ENCODE measurements at regions of chr10 and their contacts with region 1.

Region 1: DNA sequence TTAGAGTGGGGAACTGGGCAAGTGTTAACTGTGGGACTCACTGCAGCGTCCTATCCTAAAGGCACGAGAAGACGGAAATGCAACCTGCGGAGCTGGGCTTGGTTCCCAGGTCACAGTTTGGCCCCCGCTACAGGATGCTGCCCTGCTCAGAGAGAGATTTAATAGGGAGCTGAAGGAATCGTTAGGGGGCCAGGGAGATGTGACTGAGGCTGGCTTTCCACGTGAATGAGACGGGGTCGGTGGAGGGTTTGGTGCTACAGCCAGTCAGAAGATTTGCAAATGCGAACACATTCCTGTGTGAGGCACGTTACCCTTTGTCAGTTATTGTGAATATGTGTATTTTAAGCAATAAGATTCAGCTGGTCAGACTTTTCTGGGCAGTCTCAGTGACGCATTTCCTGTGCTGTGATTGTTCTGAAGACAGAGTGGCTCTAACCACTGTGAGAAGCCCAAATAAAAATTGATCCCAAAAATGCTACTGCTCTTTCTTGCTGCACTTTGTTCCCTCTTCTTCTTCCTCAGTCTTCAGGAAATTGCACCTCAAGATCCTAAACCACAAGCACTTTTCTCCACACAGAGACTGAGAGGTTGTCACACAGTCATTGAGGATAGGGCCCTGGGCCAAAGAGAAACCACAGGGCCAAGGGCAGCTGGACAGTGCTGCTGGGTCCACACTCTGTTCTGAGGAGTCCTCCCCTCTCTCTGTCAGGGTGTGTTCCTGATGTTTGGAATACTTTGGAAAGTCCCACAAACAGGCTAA is 21.2 kb downstream of the CYP17A1 start:
- DNase-seq: peak in 2 of 4 donors; percentile 47 to 78
- ATAC-seq: peak; percentile 69
- H3K4me3 ChIP-seq: no peak overlapping the region
- H3K27ac ChIP-seq: peak overlapping the region; percentile 92 to 93
- H3K4me1 ChIP-seq: peaks cover 24 to 76% of the 10 kb centered on the region in 2 donors
- H3K27me3 ChIP-seq: no peaks in the 10 kb centered on the region
- CTCF ChIP-seq: no peak

Region 2: GRCh38 chr10:101512738-101513137 is 1303.2 kb before region 1 on chr10:
- intact Hi-C with region 1: no loop called
- DNase-seq: no peak
- ATAC-seq: peak; percentile 32
- H3K4me3 ChIP-seq: no peak overlapping the region
- H3K27ac ChIP-seq: no peak overlapping the region
- H3K4me1 ChIP-seq: no peaks in the 10 kb centered on the region
- H3K27me3 ChIP-seq: no peaks in the 10 kb centered on the region
- CTCF ChIP-seq: no peak

Region 3: DNA sequence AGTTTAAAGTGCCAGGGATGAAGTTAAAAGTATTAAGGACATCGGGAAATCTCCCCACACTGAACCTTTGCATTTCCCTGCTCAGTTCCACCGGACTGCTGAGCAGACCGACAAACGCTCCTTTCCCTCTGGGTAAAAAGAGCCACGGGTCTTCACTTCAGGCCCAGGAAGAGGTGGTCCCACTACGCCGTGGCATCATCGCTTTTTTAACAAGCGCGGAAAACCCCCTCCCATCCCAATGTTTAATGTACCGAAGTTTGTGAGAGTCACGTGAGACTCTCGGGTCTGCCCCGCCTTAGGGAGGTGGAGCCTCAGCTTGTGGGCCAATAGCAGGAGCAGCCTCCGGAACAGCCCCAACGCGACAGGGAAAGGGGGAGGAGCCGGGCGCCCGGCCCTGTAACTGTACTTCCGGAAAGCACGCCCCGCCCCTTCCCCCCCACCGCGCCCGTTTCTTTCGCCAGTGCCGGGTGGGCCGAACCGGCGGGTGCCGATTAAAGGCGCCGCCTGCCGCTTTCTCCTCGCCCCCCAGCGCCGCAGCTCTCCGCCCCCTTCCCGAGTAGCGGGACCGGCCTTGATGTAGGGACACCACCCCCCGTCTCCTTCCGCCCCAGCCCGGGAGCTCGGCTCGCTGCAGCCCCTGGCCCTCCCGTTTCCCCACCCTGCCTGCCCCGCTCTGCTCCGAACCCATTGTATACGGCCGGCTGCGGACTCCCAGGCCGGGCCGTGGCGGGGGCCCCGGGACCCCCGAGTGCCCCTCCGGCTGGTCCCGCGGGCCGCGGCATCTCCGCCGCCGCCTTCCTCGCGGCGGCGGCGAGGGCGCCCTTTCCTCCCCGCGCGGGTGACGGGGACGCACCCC is 173.9 kb before region 1 on chr10:
- intact Hi-C with region 1: no loop called
- DNase-seq: peak; percentile 97 to 99 (median 98)
- ATAC-seq: peak; percentile 76
- H3K4me3 ChIP-seq: peak overlapping the region; percentile 76 to 85
- H3K27ac ChIP-seq: peak overlapping the region; percentile 98 to 99
- H3K4me1 ChIP-seq: peaks cover 5 to 11% of the 10 kb centered on the region in 2 donors
- H3K27me3 ChIP-seq: no peaks in the 10 kb centered on the region
- CTCF ChIP-seq: no peak

Region 4: GRCh38 chr10:102752934-102753664 is 62.9 kb before region 1 on chr10:
- intact Hi-C with region 1: loop called in 1 of 2 experiments (anchors 10 kb)
- DNase-seq: no peak
- ATAC-seq: peak; percentile 91
- H3K4me3 ChIP-seq: no peak overlapping the region
- H3K27ac ChIP-seq: peak overlapping the region; percentile 50 to 67
- H3K4me1 ChIP-seq: peaks cover 8 to 25% of the 10 kb centered on the region in 2 donors
- H3K27me3 ChIP-seq: no peaks in the 10 kb centered on the region
- CTCF ChIP-seq: peak; percentile 38 to 42

Region 5: DNA sequence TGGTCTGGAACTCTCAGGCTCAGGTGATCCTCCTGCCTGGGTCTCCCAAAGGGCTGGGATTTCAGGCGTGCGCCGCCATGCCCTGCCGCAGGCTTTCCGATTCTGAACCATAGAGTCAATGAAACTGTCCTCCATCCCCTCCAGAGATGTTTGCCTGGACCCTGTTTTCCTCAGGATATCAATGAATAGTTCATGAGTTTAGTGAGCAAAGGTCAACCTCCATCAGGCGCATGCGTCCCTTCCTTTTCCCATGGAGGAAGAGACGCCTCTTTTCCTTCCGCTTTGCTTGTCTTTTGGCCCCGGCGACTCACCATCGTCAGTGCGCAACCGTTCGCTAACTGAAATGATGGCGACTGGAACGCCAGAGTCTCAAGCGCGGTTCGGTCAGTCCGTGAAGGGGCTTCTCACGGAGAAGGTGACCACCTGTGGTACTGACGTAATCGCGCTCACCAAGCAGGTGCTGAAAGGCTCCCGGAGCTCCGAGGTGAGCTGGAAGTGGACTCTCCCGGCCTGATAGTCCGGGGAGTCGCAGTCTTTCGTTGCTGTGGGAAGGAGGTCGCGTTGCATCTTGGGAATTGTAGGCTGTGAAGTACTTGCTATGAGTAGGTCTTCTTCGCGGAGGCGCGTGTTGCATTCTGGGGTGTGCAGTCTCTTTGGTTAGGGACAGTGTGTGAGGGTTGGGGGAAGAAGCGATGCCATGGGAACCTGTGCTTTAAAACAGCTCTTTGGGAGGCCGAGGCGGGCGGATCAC is 38.1 kb after region 1 on chr10 and contains the start of gene BORCS7:
- intact Hi-C with region 1: no loop called
- DNase-seq: peak; percentile 92 to 98 (median 96)
- ATAC-seq: peak; percentile 99
- H3K4me3 ChIP-seq: peak within 1 kb of the TSS; percentile 52 to 70
- H3K27ac ChIP-seq: peak within 1 kb of the TSS; percentile 93
- H3K4me1 ChIP-seq: peaks cover 16 to 19% of the 10 kb centered on the region in 2 donors
- H3K27me3 ChIP-seq: no peaks in the 10 kb centered on the region
- CTCF ChIP-seq: no peak
- polyA plus RNA-seq, gene BORCS7: 40.5 to 48.0 (median 42.8) TPM